ENCODE measurements at regions of chr15 and their contacts with region 1.

Region 1: GRCh38 chr15:98658831-98659699 is 10.7 kb downstream of the IGF1R start:
- DNase-seq: peak; percentile 40 to 56 (median 44)
- ATAC-seq: peak; percentile 95
- H3K4me3 ChIP-seq: no peak overlapping the region
- H3K27ac ChIP-seq: no peak overlapping the region
- H3K4me1 ChIP-seq: no peaks in the 10 kb centered on the region
- H3K27me3 ChIP-seq: peaks cover 9 to 29% of the 10 kb centered on the region in 2 experiments
- CTCF ChIP-seq: peak; percentile 77 to 86 (median 83)
- EP300 ChIP-seq: no peak
- POLR2A ChIP-seq: no peak
- RAD21 ChIP-seq: peak in 1 of 2 experiments; percentile 71; a peak in 3 of 4 replicates

Region 2: GRCh38 chr15:98442379-98442833 is 216.7 kb before region 1 on chr15:
- CTCF ChIA-PET with region 1: interaction called, 5 read pairs
- POLR2A ChIA-PET with region 1: no interaction called
- in situ Hi-C with region 1: no loop called
- intact Hi-C with region 1: loop called (anchors 1 kb)
- DNase-seq: peak; percentile 47 to 66 (median 57)
- ATAC-seq: peak; percentile 86
- H3K4me3 ChIP-seq: no peak overlapping the region
- H3K27ac ChIP-seq: no peak overlapping the region
- H3K4me1 ChIP-seq: no peaks in the 10 kb centered on the region
- H3K27me3 ChIP-seq: peaks cover 0 to 9% of the 10 kb centered on the region in 2 experiments; a peak in 1 of 5 replicates
- CTCF ChIP-seq: peak; percentile 63 to 79 (median 73)
- EP300 ChIP-seq: no peak
- POLR2A ChIP-seq: no peak
- RAD21 ChIP-seq: peak; percentile 47 to 64

Region 3: GRCh38 chr15:98518823-98519561 is 140.1 kb before region 1 on chr15:
- CTCF ChIA-PET with region 1: interaction called, 10 read pairs
- POLR2A ChIA-PET with region 1: no interaction called
- in situ Hi-C with region 1: no loop called
- intact Hi-C with region 1: loop called (anchors 1 kb)
- DNase-seq: peak; percentile 68 to 76 (median 76)
- ATAC-seq: peak; percentile 97
- H3K4me3 ChIP-seq: no peak overlapping the region
- H3K27ac ChIP-seq: no peak overlapping the region
- H3K4me1 ChIP-seq: no peaks in the 10 kb centered on the region
- H3K27me3 ChIP-seq: peaks cover 0 to 9% of the 10 kb centered on the region in 2 experiments; a peak in 2 of 5 replicates
- CTCF ChIP-seq: peak; percentile 77 to 81 (median 79)
- EP300 ChIP-seq: no peak
- POLR2A ChIP-seq: no peak
- RAD21 ChIP-seq: peak; percentile 72 to 77

Region 4: DNA sequence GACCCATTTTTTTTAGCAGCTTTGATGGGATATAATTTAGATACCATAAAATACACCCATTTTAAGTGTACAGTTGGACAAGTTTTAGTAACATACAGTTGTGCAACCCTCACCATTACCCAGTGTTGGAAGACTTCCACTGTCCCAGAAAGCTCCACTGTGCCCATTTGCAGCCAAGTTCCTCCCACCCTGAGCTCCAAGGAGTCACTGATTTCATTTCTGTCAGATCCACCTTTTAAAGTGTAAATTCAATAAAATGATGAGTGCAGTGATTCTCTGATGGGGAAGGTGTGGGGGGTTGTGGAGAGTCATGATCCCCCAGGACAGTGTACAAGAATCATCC is 103.9 kb before region 1 on chr15:
- CTCF ChIA-PET with region 1: no interaction called
- POLR2A ChIA-PET with region 1: no interaction called
- in situ Hi-C with region 1: no loop called
- intact Hi-C with region 1: no loop called
- DNase-seq: no peak
- ATAC-seq: no peak
- H3K4me3 ChIP-seq: no peak overlapping the region
- H3K27ac ChIP-seq: no peak overlapping the region
- H3K4me1 ChIP-seq: no peaks in the 10 kb centered on the region
- H3K27me3 ChIP-seq: 0 out of 5 replicates have a peak, but pooled peaks cover 0 to under 1% of the 10 kb centered on the region in 2 experiments
- CTCF ChIP-seq: no peak
- EP300 ChIP-seq: no peak
- POLR2A ChIP-seq: no peak
- RAD21 ChIP-seq: no peak

Region 5: GRCh38 chr15:98581715-98582114 is 77.3 kb before region 1 on chr15:
- CTCF ChIA-PET with region 1: no interaction called
- POLR2A ChIA-PET with region 1: no interaction called
- in situ Hi-C with region 1: no loop called
- intact Hi-C with region 1: loop called (anchors 5 kb)
- DNase-seq: no peak
- ATAC-seq: no peak
- H3K4me3 ChIP-seq: no peak overlapping the region
- H3K27ac ChIP-seq: no peak overlapping the region
- H3K4me1 ChIP-seq: no peaks in the 10 kb centered on the region
- H3K27me3 ChIP-seq: peaks cover 6 to 11% of the 10 kb centered on the region in 2 experiments; a peak in 4 of 5 replicates
- CTCF ChIP-seq: no peak
- EP300 ChIP-seq: no peak
- POLR2A ChIP-seq: no peak
- RAD21 ChIP-seq: no peak

Region 6: DNA sequence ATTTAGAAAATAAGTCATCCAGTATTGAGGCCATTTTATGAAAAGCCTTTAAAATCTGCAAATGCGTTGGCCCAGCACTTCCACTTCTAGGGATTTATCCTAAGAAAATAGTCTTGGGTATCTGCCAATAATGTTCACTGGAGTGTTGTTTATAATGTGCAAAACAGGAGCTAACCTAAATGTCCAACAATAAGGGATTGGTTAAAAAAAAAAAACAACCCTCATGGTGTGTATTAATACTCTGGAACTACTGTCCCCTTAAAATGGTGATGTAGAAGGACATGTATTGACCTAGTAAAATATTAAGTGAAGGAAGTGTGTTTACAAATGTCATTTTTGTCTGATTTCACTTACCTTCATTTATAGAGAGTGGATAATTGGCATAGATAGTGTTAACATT is 47.3 kb after region 1 on chr15:
- CTCF ChIA-PET with region 1: no interaction called
- POLR2A ChIA-PET with region 1: no interaction called
- in situ Hi-C with region 1: no loop called
- intact Hi-C with region 1: no loop called
- DNase-seq: no peak
- ATAC-seq: no peak
- H3K4me3 ChIP-seq: no peak overlapping the region
- H3K27ac ChIP-seq: no peak overlapping the region
- H3K4me1 ChIP-seq: no peaks in the 10 kb centered on the region
- H3K27me3 ChIP-seq: peaks cover 4 to 27% of the 10 kb centered on the region in 2 experiments; a peak in 3 of 5 replicates
- CTCF ChIP-seq: no peak
- EP300 ChIP-seq: no peak
- POLR2A ChIP-seq: no peak
- RAD21 ChIP-seq: no peak

Region 7: GRCh38 chr15:98896802-98897732 is 238.0 kb after region 1 on chr15:
- CTCF ChIA-PET with region 1: no interaction called
- POLR2A ChIA-PET with region 1: no interaction called
- in situ Hi-C with region 1: no loop called
- intact Hi-C with region 1: no loop called
- DNase-seq: peak in 2 of 4 experiments; percentile 21 to 27
- ATAC-seq: no peak
- H3K4me3 ChIP-seq: no peak overlapping the region
- H3K27ac ChIP-seq: no peak overlapping the region
- H3K4me1 ChIP-seq: no peaks in the 10 kb centered on the region; a peak in 1 of 5 replicates
- H3K27me3 ChIP-seq: peaks cover 9 to 24% of the 10 kb centered on the region in 2 experiments
- CTCF ChIP-seq: no peak
- EP300 ChIP-seq: peak; percentile 14; the same call in 1 of the 2 replicates
- POLR2A ChIP-seq: no peak
- RAD21 ChIP-seq: no peak

Region 8: GRCh38 chr15:99076552-99077308 is 417.7 kb after region 1 on chr15:
- CTCF ChIA-PET with region 1: no interaction called
- POLR2A ChIA-PET with region 1: no interaction called
- in situ Hi-C with region 1: no loop called
- intact Hi-C with region 1: loop called (anchors 10 kb)
- DNase-seq: peak; percentile 58 to 68 (median 62)
- ATAC-seq: peak; percentile 93
- H3K4me3 ChIP-seq: no peak overlapping the region
- H3K27ac ChIP-seq: no peak overlapping the region
- H3K4me1 ChIP-seq: no peaks in the 10 kb centered on the region
- H3K27me3 ChIP-seq: peaks cover 0 to 2% of the 10 kb centered on the region in 2 experiments; a peak in 1 of 5 replicates
- CTCF ChIP-seq: peak; percentile 77 to 84 (median 81)
- EP300 ChIP-seq: no peak
- POLR2A ChIP-seq: no peak
- RAD21 ChIP-seq: peak; percentile 62 to 87